Mammary epithelial cell (primary cell): ENCODE measurements at regions of chr7 and their contacts with region 1.

Region 1: GRCh38 chr7:66359656-66360211 is 154.6 kb downstream of the TPST1 start:
- DNase-seq: peak; percentile 99
- H3K4me3 ChIP-seq: peak overlapping the region in 1 of 3 experiments; percentile 25
- H3K27ac ChIP-seq: peak overlapping the region; percentile 85
- H3K4me1 ChIP-seq: peaks cover 46% of the 10 kb centered on the region
- H3K27me3 ChIP-seq: no peaks in the 10 kb centered on the region
- CTCF ChIP-seq: peak in 1 of 2 donors; percentile 4

Region 2: DNA sequence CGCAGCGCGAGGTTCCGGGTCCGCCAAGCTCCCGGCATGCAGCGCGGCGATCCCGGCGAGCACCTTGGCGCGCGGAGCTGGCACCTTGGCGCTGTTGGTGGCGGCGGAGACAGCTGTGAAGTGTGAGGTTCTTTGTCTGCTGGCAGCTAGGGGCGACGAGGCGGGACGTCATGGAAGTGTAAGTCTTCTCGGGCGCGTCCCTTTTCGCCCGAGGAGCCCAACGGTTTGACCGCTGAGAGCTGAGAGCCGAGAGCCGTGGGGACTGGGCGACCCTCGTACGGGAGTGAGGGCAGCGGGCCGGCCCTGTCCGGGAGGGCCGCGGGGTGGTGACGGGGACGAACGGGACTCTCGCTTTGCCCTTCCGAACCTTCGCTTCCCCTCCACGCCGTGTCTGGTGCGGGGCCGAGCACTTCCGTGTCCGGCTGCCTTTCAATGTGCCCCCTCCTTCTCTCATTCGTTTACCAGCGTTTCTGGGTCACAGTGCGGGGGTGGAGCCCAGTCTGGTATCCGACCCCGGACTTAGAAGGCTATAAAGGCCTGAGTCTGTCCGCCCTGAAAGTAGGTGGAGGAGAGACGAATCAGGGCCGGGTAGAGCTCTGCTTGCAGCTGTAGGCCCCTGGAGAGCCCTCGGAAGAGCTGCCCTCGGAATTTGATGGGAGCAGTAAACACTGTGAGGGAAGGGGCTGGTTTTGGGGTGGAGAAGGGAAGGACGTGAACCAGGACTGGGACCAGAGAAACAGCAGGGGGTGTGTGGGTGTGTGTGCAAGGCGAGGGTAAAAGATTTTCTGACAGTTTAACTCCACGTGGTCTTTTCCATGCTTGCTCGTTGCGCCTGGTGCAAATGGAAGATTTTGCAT is 244.7 kb before region 1 on chr7 and contains the start of gene CRCP:
- CTCF ChIA-PET with region 1: no interaction called
- dilution Hi-C with region 1: no loop called
- in situ Hi-C with region 1: no loop called
- intact Hi-C with region 1: loop called (anchors 1 kb)
- DNase-seq: peak; percentile 75
- H3K4me3 ChIP-seq: peak within 1 kb of the TSS; percentile 84 to 91 (median 87)
- H3K27ac ChIP-seq: peak within 1 kb of the TSS; percentile 83
- H3K4me1 ChIP-seq: peaks cover 18% of the 10 kb centered on the region
- H3K27me3 ChIP-seq: no peaks in the 10 kb centered on the region
- CTCF ChIP-seq: peak; percentile 33 to 42
- total RNA-seq, gene CRCP: 34.7 to 35.3 TPM

Region 3: DNA sequence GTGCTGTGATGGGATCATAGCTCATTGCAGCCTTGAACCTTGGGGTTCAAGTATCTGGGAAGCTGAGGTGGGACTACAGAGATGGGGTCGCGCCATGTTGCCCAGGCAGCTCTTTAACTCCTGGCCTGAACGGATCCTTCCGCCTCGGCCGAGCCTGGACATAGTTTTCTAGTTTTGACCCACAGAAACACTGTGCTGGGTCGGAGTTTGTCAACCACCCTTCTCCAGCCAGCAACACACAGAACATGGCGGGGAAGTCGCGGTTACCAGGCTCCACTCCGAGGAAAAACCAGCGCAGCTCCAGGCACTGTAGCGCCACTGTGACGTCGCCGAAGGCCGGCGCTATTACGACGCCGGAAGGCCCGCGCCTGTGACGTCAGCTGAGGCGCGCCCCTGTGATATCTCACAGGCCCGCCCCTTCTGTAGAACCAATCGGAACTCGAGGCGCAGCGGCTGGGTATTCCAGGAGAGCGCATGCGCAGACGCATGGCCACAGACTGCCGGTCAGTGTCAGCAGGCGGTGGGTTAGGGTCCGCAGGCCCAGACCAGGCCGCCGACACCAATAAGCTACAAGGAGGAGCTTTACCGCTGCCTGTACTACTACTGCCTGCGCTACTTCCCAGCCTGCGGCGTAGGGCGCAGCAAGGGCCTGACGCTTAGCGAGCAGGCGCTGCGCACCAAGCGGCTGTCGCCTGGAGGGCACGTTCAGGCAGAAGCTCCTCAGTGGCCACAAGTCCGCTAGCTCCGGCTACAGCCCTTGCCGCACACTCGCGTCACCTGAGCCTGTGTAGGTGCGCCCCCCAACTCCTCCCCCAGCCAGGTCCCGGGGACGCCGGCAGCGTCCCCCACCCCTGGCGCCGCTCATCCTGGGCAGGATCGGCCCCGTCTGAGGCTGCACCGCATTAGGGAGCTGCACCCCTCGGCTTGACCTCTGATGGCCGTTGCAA is 133.8 kb after region 1 on chr7:
- CTCF ChIA-PET with region 1: no interaction called
- dilution Hi-C with region 1: no loop called
- in situ Hi-C with region 1: no loop called
- intact Hi-C with region 1: loop called (anchors 5 kb)
- DNase-seq: peak; percentile 95
- H3K4me3 ChIP-seq: peak overlapping the region; percentile 66 to 85 (median 82)
- H3K27ac ChIP-seq: peak overlapping the region; percentile 88
- H3K4me1 ChIP-seq: peaks cover 14% of the 10 kb centered on the region
- H3K27me3 ChIP-seq: no peaks in the 10 kb centered on the region
- CTCF ChIP-seq: no peak